Spleen (tissue), 13 donors: ENCODE measurements at regions of chr5 and their contacts with region 1.

Region 1: DNA sequence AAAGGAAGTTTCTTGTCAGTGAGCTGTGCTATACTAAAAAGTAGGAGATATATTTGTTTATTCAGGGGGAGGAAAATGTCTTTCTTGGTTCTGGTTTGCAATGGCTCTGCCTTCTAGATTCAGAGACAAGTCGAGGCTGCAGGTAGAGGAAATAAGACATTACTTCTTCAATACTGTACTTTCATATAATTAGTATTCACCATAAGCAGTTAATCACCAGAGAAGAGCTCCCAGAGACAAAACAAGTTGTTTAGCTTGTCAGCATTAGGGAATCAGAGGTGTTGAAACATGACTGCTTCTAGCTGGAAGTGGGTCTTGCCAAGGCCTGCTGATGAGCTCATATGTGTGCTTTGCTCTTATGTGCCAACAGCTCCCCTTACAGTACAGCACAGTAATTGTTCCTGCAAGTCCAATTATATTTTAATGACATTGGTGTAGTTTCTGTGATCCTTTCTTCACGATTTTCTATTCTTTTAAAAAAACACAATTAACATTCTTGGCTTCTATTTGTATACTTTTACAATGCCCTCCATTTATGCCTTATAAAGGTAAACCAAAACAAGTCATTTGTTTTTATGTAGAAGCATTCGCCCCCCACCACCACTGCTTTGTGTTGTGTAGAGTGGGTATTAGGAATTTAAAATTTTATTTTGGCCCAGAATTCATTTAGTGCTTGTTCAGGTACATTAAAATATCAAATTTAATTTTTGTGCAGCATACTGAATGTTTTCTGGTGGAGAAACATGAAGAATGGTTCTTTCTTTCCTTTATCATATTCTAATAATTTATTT is 112.2 kb downstream of the RPS23 start:
- DNase-seq: no peak
- H3K4me3 ChIP-seq: no peak overlapping the region
- H3K27ac ChIP-seq: peak overlapping the region in 2 of 8 donors; percentile 10 to 34
- H3K4me1 ChIP-seq: peaks cover 0 to 9% (median 4%) of the 10 kb centered on the region in 6 donors
- H3K27me3 ChIP-seq: no peaks in the 10 kb centered on the region
- CTCF ChIP-seq: peak in 10 of 11 experiments; percentile 29 to 76 (median 50)
- POLR2A ChIP-seq: no peak

Region 2: DNA sequence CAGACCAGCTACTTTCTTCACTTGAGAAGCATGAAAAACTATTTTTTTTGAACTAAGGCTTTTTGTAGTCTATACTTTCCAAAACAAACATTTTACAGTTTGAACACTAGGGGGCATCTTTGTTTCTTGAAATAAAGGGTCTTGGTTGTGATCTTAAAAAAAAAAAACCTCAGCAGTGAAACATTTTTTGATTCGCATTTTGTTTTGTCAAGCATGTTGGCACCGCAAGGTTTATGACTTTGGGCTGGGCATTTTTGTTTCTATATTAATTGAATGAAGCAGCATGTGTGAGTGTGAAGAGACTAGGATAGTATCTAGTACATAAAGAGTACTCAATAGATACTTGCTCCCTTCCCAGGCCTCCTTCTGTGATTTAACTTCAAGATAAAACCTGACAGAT is 740.4 kb before region 1 on chr5:
- intact Hi-C with region 1: loop called (anchors 10 kb)
- DNase-seq: no peak
- H3K4me3 ChIP-seq: no peak overlapping the region
- H3K27ac ChIP-seq: no peak overlapping the region
- H3K4me1 ChIP-seq: peaks cover 0 to 18% (median 9%) of the 10 kb centered on the region in 6 donors
- H3K27me3 ChIP-seq: no peaks in the 10 kb centered on the region
- CTCF ChIP-seq: peak in 10 of 11 experiments; percentile 20 to 72 (median 61)
- POLR2A ChIP-seq: no peak

Region 3: DNA sequence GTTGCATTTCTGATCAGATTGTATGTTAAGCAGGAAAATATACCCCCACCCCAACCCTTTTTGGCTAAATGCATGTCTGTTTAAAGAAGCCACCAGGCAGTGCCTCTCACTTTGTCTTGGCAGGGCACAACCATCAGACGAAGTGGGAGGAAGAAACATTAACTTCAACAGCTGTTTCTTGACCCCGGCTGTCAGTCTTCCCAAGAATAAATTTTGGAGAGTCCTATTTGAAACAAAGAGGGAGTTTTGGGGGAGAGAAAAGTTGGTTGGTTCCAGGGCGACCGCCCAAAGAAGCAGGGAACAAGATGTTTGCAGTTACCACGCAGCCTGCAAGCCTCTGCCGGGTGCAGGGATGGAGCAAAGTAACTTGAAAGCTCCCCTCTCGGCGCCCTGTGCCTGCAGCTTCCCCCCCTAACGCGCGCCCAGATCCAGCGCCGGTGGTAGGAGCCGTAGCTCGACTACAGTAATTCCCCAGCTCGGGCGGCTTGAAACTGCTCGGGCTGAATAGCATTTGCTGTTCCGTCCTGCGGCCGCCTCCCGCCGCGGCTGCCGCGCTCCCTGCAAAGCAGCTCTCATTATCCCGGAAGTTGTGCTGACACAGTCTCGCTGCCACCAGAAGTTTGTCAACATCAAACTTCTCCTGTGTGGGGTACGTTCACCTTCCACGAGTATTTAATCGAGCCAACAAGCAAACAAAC is 314.3 kb before region 1 on chr5:
- intact Hi-C with region 1: loop called (anchors 5 kb)
- DNase-seq: peak; percentile 98
- H3K4me3 ChIP-seq: peak overlapping the region; percentile 41 to 75 (median 50)
- H3K27ac ChIP-seq: peak overlapping the region; percentile 85 to 93 (median 90)
- H3K4me1 ChIP-seq: peaks cover 19 to 36% (median 32%) of the 10 kb centered on the region in 6 donors
- H3K27me3 ChIP-seq: no peaks in the 10 kb centered on the region
- CTCF ChIP-seq: peak in 2 of 11 experiments; percentile 5 to 27
- POLR2A ChIP-seq: peak in 1 of 3 donors; percentile 32